ENCODE measurements at regions of chr4 and their contacts with region 1.

Region 1: GRCh38 chr4:112266821-112267220 is 18.9 kb downstream of the TIFA start:
- DNase-seq: no peak
- H3K4me3 ChIP-seq: no peak overlapping the region
- H3K27ac ChIP-seq: no peak overlapping the region
- H3K4me1 ChIP-seq: no peaks in the 10 kb centered on the region
- H3K27me3 ChIP-seq: no peaks in the 10 kb centered on the region
- CTCF ChIP-seq: peak in 2 of 3 donors; percentile 27
- POLR2A ChIP-seq: no peak

Region 2: DNA sequence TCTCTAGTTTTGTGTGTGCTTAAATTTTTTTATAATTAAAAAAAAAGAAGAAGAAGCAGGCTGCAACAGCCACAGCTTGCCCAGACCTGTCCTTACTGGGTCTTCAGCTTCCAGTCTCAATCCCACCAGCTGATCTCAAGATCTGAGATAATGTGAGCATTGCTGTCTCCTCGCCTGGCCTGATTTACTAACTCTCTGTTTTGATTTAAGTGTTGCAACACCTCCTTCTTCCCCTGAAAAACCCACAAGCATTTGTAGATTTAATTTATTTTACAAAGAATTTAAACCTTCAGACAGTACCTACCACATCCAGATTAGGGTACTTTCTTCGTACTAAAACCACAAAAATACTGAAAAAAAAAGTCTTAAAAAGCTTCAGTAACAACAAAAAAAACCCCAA is 83.6 kb before region 1 on chr4:
- intact Hi-C with region 1: no loop called
- DNase-seq: no peak
- H3K4me3 ChIP-seq: no peak overlapping the region
- H3K27ac ChIP-seq: no peak overlapping the region
- H3K4me1 ChIP-seq: no peaks in the 10 kb centered on the region
- H3K27me3 ChIP-seq: no peaks in the 10 kb centered on the region
- CTCF ChIP-seq: no peak
- POLR2A ChIP-seq: no peak

Region 3: GRCh38 chr4:112253382-112254000 is 13.3 kb before region 1 on chr4:
- intact Hi-C with region 1: loop called (anchors 2 kb)
- DNase-seq: no peak
- H3K4me3 ChIP-seq: no peak overlapping the region
- H3K27ac ChIP-seq: no peak overlapping the region
- H3K4me1 ChIP-seq: no peaks in the 10 kb centered on the region
- H3K27me3 ChIP-seq: no peaks in the 10 kb centered on the region
- CTCF ChIP-seq: no peak
- POLR2A ChIP-seq: no peak

Region 4: GRCh38 chr4:112312610-112313239 is 45.9 kb after region 1 on chr4:
- intact Hi-C with region 1: no loop called
- DNase-seq: no peak
- H3K4me3 ChIP-seq: no peak overlapping the region
- H3K27ac ChIP-seq: no peak overlapping the region
- H3K4me1 ChIP-seq: no peaks in the 10 kb centered on the region
- H3K27me3 ChIP-seq: no peaks in the 10 kb centered on the region
- CTCF ChIP-seq: no peak
- POLR2A ChIP-seq: no peak